CD4-positive, alpha-beta memory T cell (primary cell): ENCODE measurements at regions of chr5 and their contacts with region 1.

Region 1: GRCh38 chr5:82351754-82352145 is 73.6 kb upstream of the RPS23 start:
- DNase-seq: peak in 4 of 5 donors; percentile 46 to 53 (median 50)
- H3K4me3 ChIP-seq: no peak overlapping the region
- H3K4me3 Mint-ChIP-seq: no peak overlapping the region
- H3K27ac ChIP-seq: no peak overlapping the region
- H3K27ac Mint-ChIP-seq: no peak overlapping the region
- H3K4me1 ChIP-seq: peaks cover 11% of the 10 kb centered on the region
- H3K4me1 Mint-ChIP-seq: peaks cover 5 to 12% (median 8%) of the 10 kb centered on the region in 4 donors
- H3K27me3 ChIP-seq: no peaks in the 10 kb centered on the region
- H3K27me3 Mint-ChIP-seq: no peaks in the 10 kb centered on the region

Region 2: GRCh38 chr5:82375531-82376244 is 23.9 kb after region 1 on chr5:
- CTCF ChIA-PET with region 1: no interaction called
- POLR2A ChIA-PET with region 1: no interaction called
- intact Hi-C with region 1: no loop called
- DNase-seq: no peak
- H3K4me3 ChIP-seq: no peak overlapping the region
- H3K4me3 Mint-ChIP-seq: no peak overlapping the region
- H3K27ac ChIP-seq: no peak overlapping the region
- H3K27ac Mint-ChIP-seq: peak overlapping the region in 1 of 7 donors; percentile 78
- H3K4me1 ChIP-seq: no peaks in the 10 kb centered on the region
- H3K4me1 Mint-ChIP-seq: peaks cover 0 to 4% (median under 1%) of the 10 kb centered on the region in 4 donors
- H3K27me3 ChIP-seq: no peaks in the 10 kb centered on the region
- H3K27me3 Mint-ChIP-seq: peaks cover 0 to 1% of the 10 kb centered on the region in 2 donors

Region 3: DNA sequence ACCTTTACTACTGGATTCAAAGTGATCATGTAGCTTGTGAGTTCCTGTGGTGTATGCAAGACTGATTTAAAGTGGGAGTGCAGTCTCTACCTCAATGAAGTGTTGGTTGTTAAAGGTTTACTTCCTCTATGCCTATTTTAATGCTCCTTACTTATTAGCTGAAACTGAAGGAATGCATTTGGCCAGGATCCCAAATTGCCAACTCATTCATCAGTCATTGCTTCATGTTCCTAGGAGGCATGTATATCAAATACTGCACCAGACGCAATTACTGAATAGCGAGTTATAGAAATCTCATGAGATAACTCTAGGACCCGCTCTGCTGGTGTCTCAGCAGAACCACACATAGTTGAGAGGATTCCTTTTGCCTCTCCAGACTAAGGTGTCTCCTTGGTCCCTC is 69.4 kb after region 1 on chr5:
- CTCF ChIA-PET with region 1: no interaction called
- POLR2A ChIA-PET with region 1: no interaction called
- intact Hi-C with region 1: no loop called
- DNase-seq: no peak
- H3K4me3 ChIP-seq: no peak overlapping the region
- H3K4me3 Mint-ChIP-seq: no peak overlapping the region
- H3K27ac ChIP-seq: no peak overlapping the region
- H3K27ac Mint-ChIP-seq: no peak overlapping the region
- H3K4me1 ChIP-seq: peaks cover 4% of the 10 kb centered on the region
- H3K4me1 Mint-ChIP-seq: no peaks in the 10 kb centered on the region
- H3K27me3 ChIP-seq: no peaks in the 10 kb centered on the region
- H3K27me3 Mint-ChIP-seq: no peaks in the 10 kb centered on the region

Region 4: GRCh38 chr5:82641331-82642003 is 289.7 kb after region 1 on chr5:
- CTCF ChIA-PET with region 1: interaction called, 4 read pairs
- POLR2A ChIA-PET with region 1: no interaction called
- intact Hi-C with region 1: loop called (anchors 1 kb)
- DNase-seq: peak in 4 of 5 donors; percentile 25 to 38 (median 28)
- H3K4me3 ChIP-seq: no peak overlapping the region
- H3K4me3 Mint-ChIP-seq: no peak overlapping the region
- H3K27ac ChIP-seq: no peak overlapping the region
- H3K27ac Mint-ChIP-seq: no peak overlapping the region
- H3K4me1 ChIP-seq: no peaks in the 10 kb centered on the region
- H3K4me1 Mint-ChIP-seq: no peaks in the 10 kb centered on the region
- H3K27me3 ChIP-seq: no peaks in the 10 kb centered on the region
- H3K27me3 Mint-ChIP-seq: peaks cover 0 to 4% of the 10 kb centered on the region in 2 donors

Region 5: GRCh38 chr5:83430130-83431010 is 1078.6 kb after region 1 on chr5:
- CTCF ChIA-PET with region 1: interaction called, 14 read pairs
- POLR2A ChIA-PET with region 1: no interaction called
- intact Hi-C with region 1: loop called (anchors 1 kb)
- DNase-seq: peak; percentile 45 to 58 (median 52)
- H3K4me3 ChIP-seq: no peak overlapping the region
- H3K4me3 Mint-ChIP-seq: no peak overlapping the region
- H3K27ac ChIP-seq: no peak overlapping the region
- H3K27ac Mint-ChIP-seq: no peak overlapping the region
- H3K4me1 ChIP-seq: no peaks in the 10 kb centered on the region
- H3K4me1 Mint-ChIP-seq: no peaks in the 10 kb centered on the region
- H3K27me3 ChIP-seq: no peaks in the 10 kb centered on the region
- H3K27me3 Mint-ChIP-seq: peaks cover 0 to 2% of the 10 kb centered on the region in 2 donors

Region 6: DNA sequence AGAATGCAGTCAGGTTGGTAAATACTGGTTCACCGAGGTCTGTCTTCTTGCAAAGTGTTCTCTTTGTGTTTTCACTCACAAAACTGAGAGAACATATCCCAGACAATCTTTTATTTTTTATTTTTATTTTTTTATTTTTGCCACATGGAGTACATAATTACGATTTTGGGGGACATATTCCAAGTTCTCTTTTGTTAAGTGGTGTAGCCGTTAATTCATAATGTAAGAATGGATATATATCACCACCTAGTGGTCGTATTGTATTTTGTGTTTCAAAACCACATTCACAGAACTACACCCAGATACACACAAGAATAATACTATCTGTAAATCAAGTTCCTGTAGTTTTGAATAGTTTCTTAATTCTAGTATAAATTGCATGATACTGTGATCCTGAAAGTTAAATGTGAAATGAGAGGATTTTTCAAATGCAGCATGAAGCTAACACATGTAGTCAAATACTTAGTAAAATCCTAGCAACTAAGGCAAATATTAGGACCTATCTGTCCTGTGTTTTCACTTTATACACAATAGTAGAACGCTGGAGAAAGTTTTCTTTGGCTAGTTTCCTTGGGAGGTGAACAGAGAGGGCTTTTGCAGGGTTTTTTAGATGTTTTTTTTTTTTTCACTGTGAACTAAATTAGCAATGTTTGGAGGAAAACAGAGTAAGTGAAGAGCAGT is 1212.5 kb after region 1 on chr5:
- CTCF ChIA-PET with region 1: interaction called, 46 read pairs
- POLR2A ChIA-PET with region 1: no interaction called
- intact Hi-C with region 1: loop called (anchors 1 kb)
- DNase-seq: peak in 4 of 5 donors; percentile 27 to 40 (median 34)
- H3K4me3 ChIP-seq: no peak overlapping the region
- H3K4me3 Mint-ChIP-seq: no peak overlapping the region
- H3K27ac ChIP-seq: no peak overlapping the region
- H3K27ac Mint-ChIP-seq: no peak overlapping the region
- H3K4me1 ChIP-seq: no peaks in the 10 kb centered on the region
- H3K4me1 Mint-ChIP-seq: no peaks in the 10 kb centered on the region
- H3K27me3 ChIP-seq: no peaks in the 10 kb centered on the region
- H3K27me3 Mint-ChIP-seq: peaks cover 13% of the 10 kb centered on the region in 2 donors